ENCODE measurements at regions of chr4 and their contacts with region 1.

Region 1: DNA sequence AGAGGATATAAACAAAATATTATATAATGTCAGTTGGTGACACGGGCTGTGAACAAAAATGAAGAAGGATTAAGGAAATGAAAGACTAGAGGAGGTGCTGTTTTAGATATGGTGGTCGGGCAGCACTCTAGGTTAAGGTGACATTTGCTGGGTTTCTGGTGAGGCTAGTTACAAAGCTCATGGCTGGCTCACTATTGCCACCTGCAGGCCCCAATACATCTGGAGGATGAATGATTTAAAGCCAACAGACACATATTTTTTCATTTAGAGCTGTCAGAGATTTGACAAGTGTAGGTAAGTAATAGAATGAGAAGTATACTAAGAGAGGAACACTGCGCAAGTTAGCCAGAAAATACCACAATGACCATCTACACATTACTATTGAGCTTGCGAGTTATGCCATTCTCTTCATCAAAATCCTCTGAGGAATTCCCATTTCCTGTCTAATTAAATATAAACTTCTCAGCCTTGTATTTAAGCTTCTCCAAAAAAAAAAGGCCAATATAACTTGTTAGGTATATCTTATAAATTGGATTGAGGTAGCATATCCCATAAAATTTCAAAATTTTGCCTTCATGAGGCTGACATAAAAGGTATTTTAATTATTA is 6.4 kb upstream of the FGG start:
- DNase-seq: peak; percentile 80
- ATAC-seq: peak; percentile 76
- H3K4me3 ChIP-seq: peak overlapping the region in 2 of 3 experiments; percentile 17 to 27; a peak in 3 of 6 replicates
- H3K27ac ChIP-seq: peak overlapping the region; percentile 48
- H3K4me1 ChIP-seq: peaks cover 59% of the 10 kb centered on the region
- H3K27me3 ChIP-seq: no peaks in the 10 kb centered on the region; a peak in 1 of 5 replicates
- CTCF ChIP-seq: peak; percentile 90
- EP300 ChIP-seq: 0 out of 4 replicates have a peak, but pooled peaks of 1 of the 2 experiments have one; percentile 3
- POLR2A ChIP-seq: no peak
- RAD21 ChIP-seq: peak; percentile 94

Region 2: DNA sequence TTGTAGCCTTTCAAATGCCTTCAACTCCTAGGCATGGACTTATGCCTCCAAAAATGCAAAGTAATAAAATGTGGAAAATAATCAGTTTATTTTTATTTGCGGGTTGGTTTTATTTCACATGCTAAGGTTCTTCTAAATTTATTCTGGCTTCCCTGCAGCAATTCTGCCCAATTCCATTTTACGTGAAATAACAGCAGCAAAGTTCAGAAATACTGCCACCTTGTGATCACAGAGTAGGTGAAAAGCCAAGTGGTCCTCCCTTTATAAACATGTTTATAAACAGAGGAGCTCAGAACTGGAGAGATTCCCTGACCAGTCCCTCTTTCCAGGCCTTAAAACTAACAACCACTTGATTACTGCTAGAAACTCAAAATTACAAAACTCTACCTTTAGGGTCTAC is 112.6 kb before region 1 on chr4:
- CTCF ChIA-PET with region 1: interaction called, 4 read pairs
- POLR2A ChIA-PET with region 1: no interaction called
- in situ Hi-C with region 1: no loop called
- intact Hi-C with region 1: loop called (anchors 1 kb)
- DNase-seq: peak; percentile 27
- ATAC-seq: peak; percentile 65
- H3K4me3 ChIP-seq: no peak overlapping the region
- H3K27ac ChIP-seq: no peak overlapping the region
- H3K4me1 ChIP-seq: no peaks in the 10 kb centered on the region
- H3K27me3 ChIP-seq: no peaks in the 10 kb centered on the region; a peak in 2 of 5 replicates
- CTCF ChIP-seq: peak; percentile 63
- EP300 ChIP-seq: no peak
- POLR2A ChIP-seq: no peak
- RAD21 ChIP-seq: peak; percentile 36; the same call in 1 of the 2 replicates

Region 3: DNA sequence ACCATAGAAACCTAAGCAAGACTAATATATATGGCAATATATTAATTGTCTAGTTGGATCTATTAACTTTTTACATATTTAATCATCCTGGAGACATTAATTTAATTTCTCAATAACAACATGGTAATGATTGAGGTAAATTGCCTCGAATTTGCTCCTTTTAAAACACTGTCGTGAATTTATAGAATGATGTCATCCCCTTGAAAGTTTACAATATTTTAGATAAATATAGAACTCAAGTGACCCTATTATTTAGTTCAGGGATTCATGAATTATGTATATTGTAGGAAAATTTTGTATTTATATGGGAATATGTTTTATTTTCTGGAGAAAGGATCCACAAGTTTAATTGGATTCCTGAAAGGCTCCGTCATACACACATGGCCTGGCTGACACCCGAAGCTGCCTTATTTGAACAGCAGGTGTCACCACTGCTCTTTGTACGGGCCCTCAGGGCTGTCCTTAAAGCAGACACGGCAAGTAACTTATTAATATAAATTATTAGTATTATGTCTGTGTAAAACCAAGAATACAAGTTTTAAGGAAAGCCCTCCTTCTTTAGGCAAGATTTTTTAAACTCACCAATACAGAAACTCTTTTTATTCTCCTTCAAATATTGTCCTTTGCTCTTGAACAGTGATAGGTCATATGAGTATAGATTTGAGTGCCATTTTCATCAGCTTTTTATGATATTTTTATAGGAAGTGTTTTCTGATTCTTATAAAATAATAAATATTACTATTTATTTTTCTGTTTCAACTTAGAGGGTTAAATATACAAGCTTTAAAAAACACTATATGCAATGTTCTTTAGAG is 66.7 kb before region 1 on chr4:
- CTCF ChIA-PET with region 1: interaction called, 154 read pairs
- POLR2A ChIA-PET with region 1: interaction called, 30 read pairs
- in situ Hi-C with region 1: loop called (anchors 5 kb)
- intact Hi-C with region 1: loop called (anchors 1 kb)
- DNase-seq: peak; percentile 74
- ATAC-seq: peak; percentile 61
- H3K4me3 ChIP-seq: no peak overlapping the region
- H3K27ac ChIP-seq: no peak overlapping the region
- H3K4me1 ChIP-seq: peaks cover 21% of the 10 kb centered on the region
- H3K27me3 ChIP-seq: no peaks in the 10 kb centered on the region; a peak in 1 of 5 replicates
- CTCF ChIP-seq: peak; percentile 84
- EP300 ChIP-seq: no peak
- POLR2A ChIP-seq: no peak
- RAD21 ChIP-seq: peak; percentile 76; the same call in 1 of the 2 replicates

Region 4: GRCh38 chr4:154590329-154591006 is 28.3 kb before region 1 on chr4 and contains the start of gene FGA:
- CTCF ChIA-PET with region 1: no interaction called
- POLR2A ChIA-PET with region 1: interaction called, 468 read pairs
- in situ Hi-C with region 1: no loop called
- intact Hi-C with region 1: loop called (anchors 1 kb)
- DNase-seq: peak; percentile 99
- ATAC-seq: peak; percentile 98
- H3K4me3 ChIP-seq: peak within 1 kb of the TSS; percentile 62 to 72 (median 68)
- H3K27ac ChIP-seq: peak within 1 kb of the TSS; percentile 74
- H3K4me1 ChIP-seq: peaks cover 96% of the 10 kb centered on the region
- H3K27me3 ChIP-seq: no peaks in the 10 kb centered on the region
- CTCF ChIP-seq: no peak
- EP300 ChIP-seq: peak; percentile 79 to 100; a peak in 3 of 4 replicates
- POLR2A ChIP-seq: peak; percentile 82 to 88
- RAD21 ChIP-seq: no peak; the same call in 1 of the 2 replicates
- total RNA-seq, gene FGA: 743 and 1,523 TPM in 2 replicates

Region 5: DNA sequence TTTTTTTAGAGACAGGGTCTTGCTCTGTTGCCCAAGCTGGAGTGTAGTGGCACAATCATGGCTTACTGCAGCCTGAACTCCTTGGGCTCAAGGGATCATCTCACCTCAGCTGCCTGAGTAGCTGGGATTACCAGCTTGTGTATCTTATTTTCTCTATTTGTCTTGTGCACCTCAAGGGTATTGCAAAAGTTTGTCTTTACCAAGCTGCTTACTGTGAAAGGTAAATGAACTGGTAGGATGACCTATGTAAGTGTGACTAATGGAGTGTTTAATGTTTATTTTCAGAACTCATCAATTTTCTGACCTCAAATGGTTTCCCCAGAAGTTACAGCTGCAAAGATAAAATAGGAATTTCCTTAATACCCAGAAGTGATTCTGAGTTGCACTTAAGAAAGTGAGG is 23.0 kb before region 1 on chr4:
- CTCF ChIA-PET with region 1: interaction called, 4 read pairs
- POLR2A ChIA-PET with region 1: interaction called, 468 read pairs
- in situ Hi-C with region 1: no loop called
- intact Hi-C with region 1: loop called (anchors 1 kb)
- DNase-seq: peak; percentile 73
- ATAC-seq: no peak
- H3K4me3 ChIP-seq: no peak overlapping the region
- H3K27ac ChIP-seq: peak overlapping the region; percentile 45
- H3K4me1 ChIP-seq: peaks cover 98% of the 10 kb centered on the region
- H3K27me3 ChIP-seq: no peaks in the 10 kb centered on the region
- CTCF ChIP-seq: no peak
- EP300 ChIP-seq: peak in 1 of 2 experiments; percentile 98; a peak in 2 of 4 replicates
- POLR2A ChIP-seq: no peak
- RAD21 ChIP-seq: no peak

Region 6: DNA sequence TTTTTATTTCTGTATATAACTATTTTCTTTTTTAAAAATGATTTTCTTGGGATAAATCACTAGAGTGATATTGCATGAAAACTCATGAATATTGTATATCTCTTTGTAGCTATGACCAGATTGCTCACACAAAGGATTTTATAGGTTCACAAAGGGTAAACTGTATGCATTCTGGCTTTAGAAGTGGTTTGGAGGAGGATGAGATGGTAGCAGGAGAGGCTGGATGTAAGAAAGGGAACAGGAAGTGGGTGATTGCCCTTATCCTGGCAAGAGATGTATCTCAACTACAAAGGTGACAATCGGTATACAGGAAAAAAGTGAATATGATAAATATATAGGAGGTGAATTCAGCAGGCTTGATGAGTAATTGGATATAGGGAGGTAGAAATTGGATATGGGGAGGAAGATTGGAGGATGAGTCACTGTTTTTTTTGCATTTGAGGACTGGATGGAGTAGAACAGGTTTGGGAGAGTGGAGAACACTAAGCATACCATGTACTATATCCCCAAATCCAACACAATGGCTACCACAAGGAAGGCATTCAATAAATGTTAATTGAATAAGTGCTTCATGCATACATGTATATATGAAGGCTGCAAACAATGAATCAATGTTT is 16.3 kb before region 1 on chr4:
- CTCF ChIA-PET with region 1: interaction called, 4 read pairs
- POLR2A ChIA-PET with region 1: interaction called, 127 read pairs
- in situ Hi-C with region 1: no loop called
- intact Hi-C with region 1: loop called (anchors 1 kb)
- DNase-seq: no peak
- ATAC-seq: peak; percentile 8; the same call in 1 of the 3 replicates
- H3K4me3 ChIP-seq: no peak overlapping the region
- H3K27ac ChIP-seq: peak overlapping the region; percentile 0
- H3K4me1 ChIP-seq: peaks cover 87% of the 10 kb centered on the region
- H3K27me3 ChIP-seq: no peaks in the 10 kb centered on the region
- CTCF ChIP-seq: no peak
- EP300 ChIP-seq: no peak
- POLR2A ChIP-seq: peak; percentile 27 to 40; a peak in 3 of 4 replicates
- RAD21 ChIP-seq: no peak